Heart left ventricle (tissue), 16 donors: ENCODE measurements at regions of chr1 and their contacts with region 1.

Region 1: GRCh38 chr1:234309598-234310459 is 63.4 kb upstream of the COA6 start:
- DNase-seq: peak; percentile 35 to 75 (median 43)
- ATAC-seq: peak in 3 of 4 donors; percentile 63 to 77 (median 74)
- H3K4me3 ChIP-seq: peak overlapping the region in 2 of 12 donors; percentile 4 to 19
- H3K27ac ChIP-seq: no peak overlapping the region
- H3K4me1 ChIP-seq: peaks cover 0 to 8% (median 0%) of the 10 kb centered on the region in 12 donors
- H3K27me3 ChIP-seq: peaks cover 0 to 23% (median 0%) of the 10 kb centered on the region in 9 donors
- CTCF ChIP-seq: peak; percentile 72 to 90 (median 80)
- POLR2A ChIP-seq: no peak

Region 2: DNA sequence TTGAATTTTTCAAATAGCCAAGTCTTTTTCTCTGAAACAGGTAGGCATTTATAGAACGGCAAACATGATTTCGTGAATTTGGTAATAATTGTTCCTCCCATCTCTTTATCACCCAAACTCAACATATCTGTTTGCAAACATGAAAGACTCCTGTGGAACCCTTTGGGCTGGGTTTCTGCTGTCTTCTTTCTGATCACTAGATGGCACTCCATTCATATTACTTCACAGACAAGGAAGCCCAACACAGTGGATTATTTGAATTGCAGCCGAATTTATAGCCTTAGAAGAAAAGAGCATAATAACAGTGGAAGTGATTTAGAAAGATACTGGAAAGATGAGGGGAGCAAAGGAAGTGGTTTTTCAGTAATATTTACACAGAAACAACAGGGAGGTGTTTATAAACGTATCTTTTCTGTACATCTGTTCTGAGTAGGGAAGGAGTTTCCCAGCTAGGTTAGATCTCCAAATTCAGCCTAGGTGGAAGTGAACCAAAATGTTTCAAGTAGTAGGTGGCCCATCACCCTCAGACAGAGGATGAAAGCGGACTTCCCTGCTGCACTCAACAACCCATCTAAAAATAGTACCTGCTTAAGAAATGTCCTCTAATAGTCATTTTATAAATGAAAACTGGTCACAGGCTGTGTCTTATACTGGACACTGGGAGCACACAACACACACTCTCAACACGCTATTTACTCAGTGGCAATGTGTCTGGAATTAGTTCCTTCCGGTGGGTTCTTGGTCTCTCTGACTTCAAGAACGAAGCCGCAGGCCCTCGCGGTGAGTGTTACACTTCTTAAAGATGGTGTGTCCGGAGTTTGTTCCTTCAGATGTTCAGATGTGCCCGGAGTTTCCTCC is 914.7 kb before region 1 on chr1:
- intact Hi-C with region 1: loop called in 1 of 10 experiments (anchors 10 kb)
- DNase-seq: no peak
- ATAC-seq: peak in 3 of 4 donors; percentile 68 to 82 (median 69)
- H3K4me3 ChIP-seq: no peak overlapping the region
- H3K27ac ChIP-seq: no peak overlapping the region
- H3K4me1 ChIP-seq: peaks cover 0 to 8% (median 0%) of the 10 kb centered on the region in 12 donors
- H3K27me3 ChIP-seq: peaks cover 0 to 22% (median 8%) of the 10 kb centered on the region in 9 donors
- CTCF ChIP-seq: peak; percentile 49 to 80 (median 62)
- POLR2A ChIP-seq: no peak

Region 3: GRCh38 chr1:234114648-234115307 is 195.1 kb before region 1 on chr1:
- intact Hi-C with region 1: loop called in 8 of 10 experiments (anchors 2 to 10 kb)
- DNase-seq: no peak
- ATAC-seq: no peak
- H3K4me3 ChIP-seq: peak overlapping the region in 1 of 12 donors; percentile 16
- H3K27ac ChIP-seq: no peak overlapping the region
- H3K4me1 ChIP-seq: peaks cover 0 to 4% (median 0%) of the 10 kb centered on the region in 12 donors
- H3K27me3 ChIP-seq: peaks cover 0 to 22% (median 0%) of the 10 kb centered on the region in 9 donors
- CTCF ChIP-seq: peak; percentile 48 to 77 (median 64)
- POLR2A ChIP-seq: no peak

Region 4: GRCh38 chr1:234139966-234140365 is 169.9 kb before region 1 on chr1:
- intact Hi-C with region 1: loop called in 1 of 10 experiments (anchors 10 kb)
- DNase-seq: no peak
- ATAC-seq: no peak
- H3K4me3 ChIP-seq: no peak overlapping the region
- H3K27ac ChIP-seq: no peak overlapping the region
- H3K4me1 ChIP-seq: no peaks in the 10 kb centered on the region
- H3K27me3 ChIP-seq: peaks cover 0 to 8% (median 0%) of the 10 kb centered on the region in 9 donors
- CTCF ChIP-seq: no peak
- POLR2A ChIP-seq: no peak

Region 5: DNA sequence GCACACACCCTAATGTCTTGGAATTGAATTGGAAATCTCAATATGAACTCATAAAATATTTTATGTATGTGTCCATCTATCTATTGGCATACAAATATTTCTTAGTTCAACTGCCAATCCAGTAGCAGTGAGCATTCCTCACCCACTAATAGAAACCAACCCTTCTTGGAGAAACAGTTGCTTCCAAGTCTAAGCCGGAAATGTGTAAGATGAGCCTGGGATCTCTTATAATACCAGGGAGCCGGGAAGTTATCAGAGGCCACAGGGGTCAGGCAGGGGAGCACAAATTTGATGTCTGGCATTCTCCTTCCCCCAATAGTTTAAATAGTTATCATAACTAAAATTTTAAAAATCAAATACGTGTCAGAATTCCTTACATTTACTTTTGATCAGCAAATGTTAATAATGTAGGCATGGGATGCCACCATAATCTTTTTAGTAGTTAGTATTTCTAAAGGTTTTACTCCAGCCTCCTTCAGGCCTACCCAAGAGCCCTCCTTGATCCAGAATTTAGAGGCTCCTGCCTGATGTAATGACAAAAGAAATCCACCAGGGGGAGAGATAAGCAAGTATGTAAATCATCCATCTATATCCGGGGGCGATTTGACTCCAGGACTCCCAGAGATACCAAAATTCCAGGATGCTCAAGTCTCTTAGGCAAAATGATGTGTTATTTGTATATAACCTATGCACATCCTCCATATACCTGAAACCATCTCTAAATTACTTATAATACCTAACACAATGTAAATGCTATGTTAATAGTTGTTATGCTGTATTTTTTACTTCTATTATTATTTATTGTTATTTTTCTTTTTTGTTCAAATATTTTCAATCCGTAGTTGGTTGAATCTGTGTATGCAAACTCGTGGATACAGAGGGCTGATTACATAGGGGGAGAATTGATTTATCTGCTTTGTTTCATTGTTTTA is 155.2 kb before region 1 on chr1:
- intact Hi-C with region 1: loop called in 5 of 10 experiments (anchors 5 to 10 kb)
- DNase-seq: no peak
- ATAC-seq: no peak
- H3K4me3 ChIP-seq: no peak overlapping the region
- H3K27ac ChIP-seq: no peak overlapping the region
- H3K4me1 ChIP-seq: no peaks in the 10 kb centered on the region
- H3K27me3 ChIP-seq: peaks cover 0 to 4% (median 0%) of the 10 kb centered on the region in 9 donors
- CTCF ChIP-seq: peak; percentile 43 to 83 (median 73)
- POLR2A ChIP-seq: no peak

Region 6: DNA sequence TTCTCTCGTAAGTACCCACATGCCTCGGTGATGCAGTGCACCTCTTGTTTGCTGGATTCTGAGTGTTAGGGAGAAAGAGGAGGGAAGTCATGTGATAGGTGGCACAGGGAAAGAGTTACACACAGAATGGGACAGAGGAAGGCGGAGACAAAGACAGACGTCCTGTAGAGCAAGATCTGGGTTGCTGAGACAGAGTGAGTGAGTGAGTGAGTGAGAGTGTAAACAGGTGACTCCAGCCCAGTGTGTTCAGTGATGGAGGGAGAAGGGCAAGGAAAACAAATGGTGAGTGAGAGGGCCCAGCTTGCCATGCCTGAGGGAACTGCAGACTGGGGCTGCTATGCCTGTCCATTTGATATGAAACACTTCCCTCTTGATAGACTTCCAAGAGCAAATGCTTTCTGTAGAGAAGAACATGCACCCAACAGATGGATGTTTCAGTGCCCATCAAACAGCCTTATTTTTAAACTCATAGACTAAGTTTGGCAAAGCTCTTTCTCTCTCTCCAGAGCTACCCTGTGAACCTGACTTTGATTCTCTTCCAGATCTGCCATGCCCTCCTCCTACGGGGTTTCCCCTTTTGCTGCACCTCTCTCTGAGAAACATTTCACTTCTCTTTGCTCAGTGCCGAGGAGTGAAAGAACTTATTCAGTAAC is 146.4 kb before region 1 on chr1:
- intact Hi-C with region 1: loop called in 4 of 10 experiments (anchors 5 to 10 kb)
- DNase-seq: no peak
- ATAC-seq: peak in 2 of 4 donors; percentile 42 to 50
- H3K4me3 ChIP-seq: no peak overlapping the region
- H3K27ac ChIP-seq: no peak overlapping the region
- H3K4me1 ChIP-seq: no peaks in the 10 kb centered on the region
- H3K27me3 ChIP-seq: peaks cover 0 to 10% (median 0%) of the 10 kb centered on the region in 9 donors
- CTCF ChIP-seq: no peak
- POLR2A ChIP-seq: no peak

Region 7: GRCh38 chr1:234386122-234386521 is 76.3 kb after region 1 on chr1:
- intact Hi-C with region 1: no loop called
- DNase-seq: no peak
- ATAC-seq: no peak
- H3K4me3 ChIP-seq: no peak overlapping the region
- H3K27ac ChIP-seq: peak overlapping the region in 1 of 12 donors; percentile 0
- H3K4me1 ChIP-seq: no peaks in the 10 kb centered on the region
- H3K27me3 ChIP-seq: no peaks in the 10 kb centered on the region
- CTCF ChIP-seq: no peak
- POLR2A ChIP-seq: no peak